ENCODE measurements at regions of chr15 and their contacts with region 1.

Region 1: GRCh38 chr15:94119923-94120775 is 111.2 kb upstream of the MCTP2 start:
- DNase-seq: peak; percentile 90
- H3K4me3 Mint-ChIP-seq: no peak overlapping the region
- H3K27ac Mint-ChIP-seq: peak overlapping the region; percentile 35
- H3K4me1 Mint-ChIP-seq: no peaks in the 10 kb centered on the region
- H3K27me3 Mint-ChIP-seq: no peaks in the 10 kb centered on the region
- CTCF ChIP-seq: peak; percentile 98

Region 2: GRCh38 chr15:92797168-92797951 is 1322.8 kb before region 1 on chr15:
- CTCF ChIA-PET with region 1: interaction called, 6 read pairs
- POLR2A ChIA-PET with region 1: no interaction called
- intact Hi-C with region 1: loop called (anchors 2 kb)
- DNase-seq: peak; percentile 76
- H3K4me3 Mint-ChIP-seq: no peak overlapping the region
- H3K27ac Mint-ChIP-seq: peak overlapping the region; percentile 84
- H3K4me1 Mint-ChIP-seq: peaks cover 18% of the 10 kb centered on the region
- H3K27me3 Mint-ChIP-seq: no peaks in the 10 kb centered on the region
- CTCF ChIP-seq: peak; percentile 53

Region 3: DNA sequence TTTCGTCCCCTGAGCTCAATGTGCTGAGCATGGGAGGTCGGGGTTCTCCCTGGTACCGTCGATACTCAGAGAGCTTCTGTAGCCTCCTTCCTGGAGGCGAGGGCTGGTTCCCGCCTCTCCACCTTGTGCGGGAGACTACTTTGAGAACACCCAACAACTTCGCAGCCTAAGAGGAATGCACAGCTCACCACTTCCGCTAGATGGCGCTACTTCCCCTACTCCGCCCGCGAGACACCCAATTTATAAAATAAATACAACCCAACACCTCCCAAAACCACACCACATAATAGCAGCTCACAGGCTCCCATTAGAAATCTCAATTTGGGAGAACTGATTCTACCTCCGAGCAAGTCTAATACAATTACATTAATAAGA is 1032.3 kb before region 1 on chr15:
- CTCF ChIA-PET with region 1: interaction called, 34 read pairs
- POLR2A ChIA-PET with region 1: interaction called, 5 read pairs
- intact Hi-C with region 1: loop called (anchors 1 kb)
- DNase-seq: peak; percentile 80
- H3K4me3 Mint-ChIP-seq: peak overlapping the region; percentile 69
- H3K27ac Mint-ChIP-seq: no peak overlapping the region
- H3K4me1 Mint-ChIP-seq: no peaks in the 10 kb centered on the region
- H3K27me3 Mint-ChIP-seq: peaks cover 23% of the 10 kb centered on the region
- CTCF ChIP-seq: peak; percentile 88

Region 4: GRCh38 chr15:93974804-93975481 is 145.2 kb before region 1 on chr15:
- CTCF ChIA-PET with region 1: interaction called, 27 read pairs
- POLR2A ChIA-PET with region 1: no interaction called
- intact Hi-C with region 1: no loop called
- DNase-seq: peak; percentile 70
- H3K4me3 Mint-ChIP-seq: no peak overlapping the region
- H3K27ac Mint-ChIP-seq: no peak overlapping the region
- H3K4me1 Mint-ChIP-seq: no peaks in the 10 kb centered on the region
- H3K27me3 Mint-ChIP-seq: no peaks in the 10 kb centered on the region
- CTCF ChIP-seq: peak; percentile 67

Region 5: DNA sequence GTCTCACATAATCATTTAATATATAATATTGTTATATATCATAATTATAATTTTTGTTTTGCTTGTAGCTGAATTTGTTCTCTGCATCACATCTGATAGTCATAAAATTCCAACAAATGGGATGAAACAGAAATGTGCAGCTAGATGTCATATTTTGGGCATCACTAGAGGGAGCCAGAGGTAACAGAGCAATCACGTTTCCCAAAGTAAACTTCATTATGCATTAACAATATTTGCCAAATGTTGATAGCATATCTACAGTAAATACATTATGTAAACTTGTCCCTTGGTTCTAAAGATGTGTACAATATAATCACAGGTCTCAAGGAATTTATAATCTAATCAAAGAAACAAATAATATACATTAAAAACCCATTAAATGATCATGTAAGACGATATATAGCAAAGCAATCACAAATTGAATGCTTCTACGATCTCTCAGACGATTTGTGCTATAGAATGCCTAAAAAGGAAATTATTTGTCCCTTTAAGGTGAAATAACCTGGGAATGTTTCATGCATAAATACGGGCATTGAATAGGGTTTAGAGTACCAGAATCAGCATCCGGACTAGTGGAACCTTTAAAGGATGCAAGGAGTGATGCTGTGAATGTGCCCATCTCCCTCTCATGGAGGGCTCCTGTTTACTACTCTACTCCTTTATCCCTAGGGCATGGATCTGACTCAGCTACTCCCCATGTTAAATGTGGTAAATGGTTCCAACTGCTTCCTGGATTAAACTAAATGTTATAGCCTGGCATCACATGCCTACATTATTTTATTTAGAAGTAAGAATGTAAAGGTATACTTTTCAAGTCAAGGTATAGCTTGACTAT is 122.8 kb before region 1 on chr15:
- CTCF ChIA-PET with region 1: interaction called, 102 read pairs
- POLR2A ChIA-PET with region 1: interaction called, 6 read pairs
- intact Hi-C with region 1: loop called (anchors 1 kb)
- DNase-seq: peak; percentile 51
- H3K4me3 Mint-ChIP-seq: no peak overlapping the region
- H3K27ac Mint-ChIP-seq: no peak overlapping the region
- H3K4me1 Mint-ChIP-seq: no peaks in the 10 kb centered on the region
- H3K27me3 Mint-ChIP-seq: no peaks in the 10 kb centered on the region
- CTCF ChIP-seq: peak; percentile 80

Region 6: GRCh38 chr15:94080418-94080817 is 39.7 kb before region 1 on chr15:
- CTCF ChIA-PET with region 1: interaction called, 10 read pairs
- POLR2A ChIA-PET with region 1: interaction called, 4 read pairs
- intact Hi-C with region 1: no loop called
- DNase-seq: peak; percentile 92
- H3K4me3 Mint-ChIP-seq: peak overlapping the region; percentile 70
- H3K27ac Mint-ChIP-seq: no peak overlapping the region
- H3K4me1 Mint-ChIP-seq: peaks cover 25% of the 10 kb centered on the region
- H3K27me3 Mint-ChIP-seq: no peaks in the 10 kb centered on the region
- CTCF ChIP-seq: no peak

Region 7: GRCh38 chr15:94105760-94106159 is 14.4 kb before region 1 on chr15:
- CTCF ChIA-PET with region 1: interaction called, 23 read pairs
- POLR2A ChIA-PET with region 1: no interaction called
- intact Hi-C with region 1: no loop called
- DNase-seq: peak; percentile 8
- H3K4me3 Mint-ChIP-seq: no peak overlapping the region
- H3K27ac Mint-ChIP-seq: peak overlapping the region; percentile 21
- H3K4me1 Mint-ChIP-seq: peaks cover 8% of the 10 kb centered on the region
- H3K27me3 Mint-ChIP-seq: no peaks in the 10 kb centered on the region
- CTCF ChIP-seq: no peak

Region 8: DNA sequence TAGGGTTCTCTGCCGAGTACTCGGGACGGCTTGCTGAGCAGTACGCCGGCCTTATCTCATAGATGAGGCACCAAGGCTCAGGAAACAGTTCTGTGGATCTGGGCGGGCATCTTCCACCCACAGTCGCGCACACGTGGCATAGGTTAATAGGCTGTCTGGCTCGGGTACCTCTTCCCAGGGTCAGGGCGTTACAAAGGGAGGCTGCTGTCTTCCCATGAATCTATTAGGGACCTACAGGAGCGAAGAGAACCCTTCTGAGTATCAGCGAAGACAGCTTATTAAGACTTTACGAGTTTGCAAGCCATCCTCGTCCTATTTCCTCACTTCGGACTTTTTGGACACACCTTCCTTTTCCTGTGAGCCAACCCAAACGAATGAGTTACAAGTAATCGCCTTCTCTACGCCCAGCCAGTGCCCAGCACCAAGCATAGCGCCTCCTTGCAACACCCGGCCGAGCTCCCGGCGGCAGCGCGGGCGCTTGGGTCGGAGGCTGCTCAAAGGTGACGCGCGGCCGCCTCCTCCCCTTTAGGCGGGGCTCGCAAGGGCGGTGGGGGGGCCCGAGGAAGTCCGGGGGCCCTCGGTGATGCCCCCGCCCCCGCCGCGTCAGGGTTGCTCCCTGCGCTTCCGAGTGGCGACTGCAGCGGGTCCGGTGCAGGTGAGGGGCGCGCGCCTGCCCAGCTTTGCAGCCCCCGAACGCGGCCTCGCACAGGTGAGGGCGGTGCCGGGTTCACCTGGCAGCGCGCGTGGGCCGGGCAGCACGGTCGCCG is 111.0 kb after region 1 on chr15 and contains the start of gene MCTP2:
- CTCF ChIA-PET with region 1: no interaction called
- POLR2A ChIA-PET with region 1: no interaction called
- intact Hi-C with region 1: no loop called
- DNase-seq: peak; percentile 95
- H3K4me3 Mint-ChIP-seq: peak within 1 kb of the TSS; percentile 75
- H3K27ac Mint-ChIP-seq: peak within 1 kb of the TSS; percentile 85
- H3K4me1 Mint-ChIP-seq: peaks cover 33% of the 10 kb centered on the region
- H3K27me3 Mint-ChIP-seq: no peaks in the 10 kb centered on the region
- CTCF ChIP-seq: no peak
- total RNA-seq, gene MCTP2: 20.5 and 25.7 TPM in 2 replicates

Region 9: GRCh38 chr15:94297558-94297957 is 177.4 kb after region 1 on chr15:
- CTCF ChIA-PET with region 1: no interaction called
- POLR2A ChIA-PET with region 1: no interaction called
- intact Hi-C with region 1: no loop called
- DNase-seq: no peak
- H3K4me3 Mint-ChIP-seq: no peak overlapping the region
- H3K27ac Mint-ChIP-seq: no peak overlapping the region
- H3K4me1 Mint-ChIP-seq: peaks cover 10% of the 10 kb centered on the region
- H3K27me3 Mint-ChIP-seq: no peaks in the 10 kb centered on the region
- CTCF ChIP-seq: no peak